ENCODE measurements at regions of chr2 and their contacts with region 1.

Region 1: GRCh38 chr2:149573760-149574159 is 13.8 kb downstream of the MMADHC start:
- DNase-seq: no peak
- H3K4me3 ChIP-seq: no peak overlapping the region
- H3K27ac ChIP-seq: no peak overlapping the region
- H3K4me1 ChIP-seq: no peaks in the 10 kb centered on the region
- H3K27me3 ChIP-seq: no peaks in the 10 kb centered on the region
- CTCF ChIP-seq: peak; percentile 1 to 22

Region 2: GRCh38 chr2:149492923-149493322 is 80.8 kb before region 1 on chr2:
- CTCF ChIA-PET with region 1: no interaction called
- dilution Hi-C with region 1: no loop called
- in situ Hi-C with region 1: no loop called
- intact Hi-C with region 1: no loop called
- DNase-seq: no peak
- H3K4me3 ChIP-seq: no peak overlapping the region
- H3K27ac ChIP-seq: no peak overlapping the region
- H3K4me1 ChIP-seq: no peaks in the 10 kb centered on the region
- H3K27me3 ChIP-seq: peaks cover 6% of the 10 kb centered on the region
- CTCF ChIP-seq: no peak

Region 3: DNA sequence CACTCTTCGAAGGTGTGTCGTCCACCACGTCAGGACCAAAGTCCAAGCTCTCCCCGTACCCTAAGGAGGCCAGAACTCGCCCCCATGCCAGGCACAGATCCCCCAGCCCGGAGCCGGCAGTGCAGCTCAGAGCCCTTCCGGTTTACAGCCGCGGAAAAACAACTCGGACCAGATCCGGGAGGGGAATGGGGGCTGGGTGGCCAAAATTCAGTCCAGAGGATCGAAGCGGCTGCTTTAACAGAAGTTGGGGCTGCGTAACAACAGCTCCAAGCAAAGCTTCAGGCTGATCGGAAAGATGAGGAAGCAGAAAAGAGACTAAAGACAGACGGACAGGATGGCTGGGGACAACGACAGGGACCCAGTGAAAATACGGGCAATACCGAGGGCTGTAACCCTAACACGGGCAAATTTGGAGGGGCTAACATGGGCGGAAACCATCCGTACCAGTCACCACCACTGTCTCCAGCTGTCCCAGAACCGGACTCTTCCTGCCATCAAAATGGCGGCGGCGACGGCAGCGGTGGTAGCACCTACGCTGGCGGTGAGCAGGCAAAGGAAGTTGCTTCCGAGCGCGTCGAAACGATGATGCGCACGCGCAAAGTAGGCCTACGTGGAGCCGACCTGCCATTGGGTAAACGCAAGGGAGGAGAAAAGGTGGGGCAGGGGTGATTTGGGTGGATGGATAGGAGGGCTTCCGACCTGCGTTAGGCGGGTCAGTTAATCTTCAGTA is 13.6 kb after region 1 on chr2 and contains the start of gene MMADHC:
- CTCF ChIA-PET with region 1: interaction called, 15 read pairs
- dilution Hi-C with region 1: no loop called
- in situ Hi-C with region 1: no loop called
- intact Hi-C with region 1: no loop called
- DNase-seq: peak; percentile 90
- H3K4me3 ChIP-seq: peak within 1 kb of the TSS; percentile 66 to 98 (median 85)
- H3K27ac ChIP-seq: peak within 1 kb of the TSS; percentile 95
- H3K4me1 ChIP-seq: peaks cover 12% of the 10 kb centered on the region
- H3K27me3 ChIP-seq: no peaks in the 10 kb centered on the region
- CTCF ChIP-seq: no peak
- total RNA-seq, gene MMADHC: 116 to 141 TPM

Region 4: GRCh38 chr2:149597668-149598326 is 24.0 kb after region 1 on chr2:
- CTCF ChIA-PET with region 1: no interaction called
- dilution Hi-C with region 1: no loop called
- in situ Hi-C with region 1: no loop called
- intact Hi-C with region 1: no loop called
- DNase-seq: peak; percentile 82
- H3K4me3 ChIP-seq: peak overlapping the region in 2 of 3 experiments; percentile 18 to 28
- H3K27ac ChIP-seq: peak overlapping the region; percentile 47
- H3K4me1 ChIP-seq: peaks cover 18% of the 10 kb centered on the region
- H3K27me3 ChIP-seq: no peaks in the 10 kb centered on the region
- CTCF ChIP-seq: peak; percentile 72 to 83

Measured in mammary epithelial cell (primary cell).